ENCODE measurements at regions of chr13 and their contacts with region 1.

Region 1: GRCh38 chr13:36858290-36858689 is 39.3 kb downstream of the RFXAP start:
- DNase-seq: peak; percentile 6 to 42 (median 10)
- ATAC-seq: peak; percentile 82
- H3K4me3 ChIP-seq: no peak overlapping the region
- H3K27ac ChIP-seq: no peak overlapping the region
- H3K4me1 ChIP-seq: peaks cover 0 to 6% of the 10 kb centered on the region in 2 experiments; a peak in 1 of 5 replicates
- H3K27me3 ChIP-seq: peaks cover 3 to 5% of the 10 kb centered on the region in 2 experiments; a peak in 4 of 5 replicates
- CTCF ChIP-seq: peak; percentile 44 to 49 (median 48); a peak in 5 of 6 replicates
- EP300 ChIP-seq: no peak
- POLR2A ChIP-seq: no peak
- RAD21 ChIP-seq: peak in 1 of 2 experiments; percentile 61; a peak in 3 of 4 replicates

Region 2: DNA sequence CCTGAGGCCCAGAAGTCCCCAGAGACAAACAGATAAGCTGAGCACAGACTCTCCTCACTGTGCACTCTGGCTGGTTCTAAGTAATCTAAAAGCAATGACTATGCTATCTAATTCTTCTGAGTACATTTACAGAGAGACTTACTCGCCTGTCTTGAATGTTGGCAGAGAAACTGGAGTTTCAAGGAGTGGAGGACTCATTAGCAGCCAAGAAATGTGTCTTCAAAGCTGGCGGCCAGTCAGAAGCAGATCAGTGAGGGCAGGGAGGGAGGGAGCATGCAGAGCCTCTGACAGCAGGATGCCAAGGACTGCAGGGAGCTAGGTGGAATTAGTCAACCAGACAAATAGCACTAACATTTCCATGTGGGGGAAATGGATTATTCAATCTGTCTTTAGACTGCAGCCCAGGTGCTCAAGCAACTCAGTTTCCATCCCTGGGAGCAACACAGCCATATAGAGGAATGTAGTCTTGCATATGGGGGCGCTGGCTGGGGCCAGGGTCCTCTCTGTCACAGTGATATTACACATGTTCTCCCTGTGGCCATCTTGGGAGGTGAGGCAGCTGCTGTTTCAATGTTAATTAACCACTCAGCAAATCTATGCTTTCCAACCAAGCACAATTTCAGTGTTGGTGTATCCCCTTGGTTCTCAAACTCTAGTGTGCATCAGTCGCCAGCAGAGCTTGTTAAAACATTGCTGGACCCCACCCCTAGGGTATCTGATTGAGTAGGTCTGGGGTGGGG is 328.1 kb before region 1 on chr13:
- CTCF ChIA-PET with region 1: no interaction called
- POLR2A ChIA-PET with region 1: no interaction called
- in situ Hi-C with region 1: no loop called
- intact Hi-C with region 1: no loop called
- DNase-seq: no peak
- ATAC-seq: no peak
- H3K4me3 ChIP-seq: no peak overlapping the region
- H3K27ac ChIP-seq: no peak overlapping the region
- H3K4me1 ChIP-seq: no peaks in the 10 kb centered on the region
- H3K27me3 ChIP-seq: no peaks in the 10 kb centered on the region
- CTCF ChIP-seq: no peak
- EP300 ChIP-seq: no peak
- POLR2A ChIP-seq: no peak
- RAD21 ChIP-seq: no peak

Region 3: DNA sequence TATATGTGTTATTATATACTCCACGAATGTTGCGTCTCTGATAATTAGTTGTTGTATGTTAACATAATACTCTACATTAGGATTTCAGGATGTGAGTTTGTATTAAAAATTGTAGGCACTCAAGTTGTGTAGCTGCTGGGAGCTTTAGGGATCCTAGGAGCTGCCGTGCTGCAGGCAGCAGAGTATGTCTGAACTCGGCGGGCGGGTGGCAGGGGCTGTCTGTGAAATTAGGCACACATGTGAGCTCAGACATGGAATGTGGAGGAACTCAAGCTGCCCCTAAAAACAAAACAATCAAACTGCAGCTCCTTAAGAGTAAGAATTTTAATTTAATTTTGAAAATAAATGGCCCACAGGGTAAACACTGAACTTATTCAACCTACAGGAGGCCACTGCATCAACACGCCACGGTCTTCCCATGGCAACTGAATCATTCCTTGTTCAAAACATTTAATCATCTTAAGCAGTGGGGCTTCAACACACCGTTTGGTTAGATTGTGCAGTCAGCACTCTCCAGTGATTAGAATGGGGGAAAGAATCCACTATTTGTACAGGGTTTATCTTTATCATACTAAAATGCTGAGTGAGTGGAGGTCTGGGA is 161.8 kb before region 1 on chr13:
- CTCF ChIA-PET with region 1: no interaction called
- POLR2A ChIA-PET with region 1: no interaction called
- in situ Hi-C with region 1: no loop called
- intact Hi-C with region 1: no loop called
- DNase-seq: no peak
- ATAC-seq: no peak
- H3K4me3 ChIP-seq: no peak overlapping the region
- H3K27ac ChIP-seq: no peak overlapping the region
- H3K4me1 ChIP-seq: no peaks in the 10 kb centered on the region
- H3K27me3 ChIP-seq: no peaks in the 10 kb centered on the region; a peak in 2 of 5 replicates
- CTCF ChIP-seq: no peak
- EP300 ChIP-seq: no peak
- POLR2A ChIP-seq: no peak
- RAD21 ChIP-seq: no peak

Region 4: GRCh38 chr13:36981156-36981743 is 123.0 kb after region 1 on chr13:
- CTCF ChIA-PET with region 1: interaction called, 4 read pairs
- POLR2A ChIA-PET with region 1: no interaction called
- in situ Hi-C with region 1: loop called (anchors 10 kb)
- intact Hi-C with region 1: loop called (anchors 5 kb)
- DNase-seq: peak; percentile 9 to 16 (median 13)
- ATAC-seq: peak; percentile 45; the same call in 1 of the 3 replicates
- H3K4me3 ChIP-seq: no peak overlapping the region
- H3K27ac ChIP-seq: no peak overlapping the region
- H3K4me1 ChIP-seq: no peaks in the 10 kb centered on the region
- H3K27me3 ChIP-seq: no peaks in the 10 kb centered on the region
- CTCF ChIP-seq: peak in 1 of 3 experiments; percentile 46; a peak in 2 of 6 replicates
- EP300 ChIP-seq: no peak
- POLR2A ChIP-seq: no peak
- RAD21 ChIP-seq: peak; percentile 30 to 43; a peak in 3 of 4 replicates

Region 5: GRCh38 chr13:37068962-37069361 is 210.7 kb after region 1 on chr13:
- CTCF ChIA-PET with region 1: interaction called, 3 read pairs
- POLR2A ChIA-PET with region 1: no interaction called
- in situ Hi-C with region 1: no loop called
- intact Hi-C with region 1: loop called (anchors 2 kb)
- DNase-seq: peak in 1 of 4 experiments; percentile 4
- ATAC-seq: peak; percentile 59
- H3K4me3 ChIP-seq: no peak overlapping the region
- H3K27ac ChIP-seq: no peak overlapping the region
- H3K4me1 ChIP-seq: peaks cover 0 to 9% of the 10 kb centered on the region in 2 experiments; a peak in 2 of 5 replicates
- H3K27me3 ChIP-seq: peaks cover 0 to 19% of the 10 kb centered on the region in 2 experiments; a peak in 2 of 5 replicates
- CTCF ChIP-seq: peak in 2 of 3 experiments; percentile 19 to 53; a peak in 3 of 6 replicates
- EP300 ChIP-seq: no peak
- POLR2A ChIP-seq: no peak
- RAD21 ChIP-seq: peak; percentile 36 to 59

Measured in K562 (cell line).